Activated T-helper 1 cell treated with anti-CD3 and anti-CD28 coated beads, Interleukin-12 subunit alpha, Interleukin-12 subunit beta, Interleukin-2, Interleukin-4 antibody, amounts not matched to agents 30 ng/mL and 10 ng/mL and 1 ng/mL, durations not matched to agents 14 hours and 24 hours and 36 hours (primary cell): ENCODE measurements at regions of chr4 and their contacts with region 1.

Region 1: GRCh38 chr4:184417802-184418511 is 56.4 kb downstream of the IRF2 start:
- DNase-seq: peak; percentile 21
- H3K4me3 Mint-ChIP-seq: peak overlapping the region; percentile 78
- H3K27ac Mint-ChIP-seq: peak overlapping the region; percentile 95
- H3K4me1 Mint-ChIP-seq: peaks cover 90% of the 10 kb centered on the region
- H3K27me3 Mint-ChIP-seq: no peaks in the 10 kb centered on the region

Region 2: DNA sequence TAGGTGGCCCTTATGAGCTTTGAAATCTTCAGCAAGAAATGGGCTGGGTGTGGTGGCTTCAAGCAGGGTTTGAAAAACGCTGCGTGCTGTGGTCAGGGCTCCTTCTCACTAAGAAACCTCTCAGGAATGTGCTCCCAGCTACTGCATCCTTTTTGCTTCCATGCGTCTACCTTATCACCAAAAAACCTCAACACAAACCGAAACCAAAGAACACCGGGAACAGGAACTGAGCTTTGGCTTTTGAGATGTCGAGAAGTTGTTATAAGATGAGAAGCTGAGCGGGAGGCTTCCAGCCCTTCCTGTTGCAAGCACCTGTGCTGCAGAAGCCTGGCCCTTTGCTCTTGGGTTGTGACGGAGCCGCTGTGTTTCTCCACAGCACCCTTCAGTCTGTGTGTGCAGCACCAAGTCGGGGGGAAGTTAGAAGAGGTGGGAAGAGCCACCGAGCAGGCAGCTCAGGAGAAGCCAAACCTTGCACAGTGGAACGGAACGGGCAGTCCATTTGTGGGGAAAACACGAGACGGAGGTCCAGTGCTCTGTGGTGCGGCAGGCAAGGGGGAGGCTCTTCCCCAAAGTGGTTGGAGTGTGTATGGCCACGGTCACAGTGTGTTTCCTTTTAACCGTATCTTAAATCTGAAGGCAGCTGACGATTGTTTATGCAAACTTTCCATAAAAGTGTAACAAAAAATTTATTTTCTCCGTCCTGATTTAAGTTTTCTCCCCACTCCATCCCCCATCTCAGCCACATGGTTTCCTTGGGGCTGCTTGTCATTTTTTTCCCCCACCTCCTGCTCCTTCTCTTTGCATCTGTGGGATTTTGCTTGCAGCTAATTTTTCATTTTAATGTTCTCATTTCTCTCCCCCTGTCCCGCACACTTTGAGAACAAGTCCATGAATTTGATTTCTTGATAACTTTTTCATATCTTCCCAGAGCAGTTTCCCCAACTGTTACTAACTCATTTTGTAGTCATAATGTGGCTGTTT is 389.3 kb before region 1 on chr4:
- intact Hi-C with region 1: no loop called
- DNase-seq: peak; percentile 6
- H3K4me3 Mint-ChIP-seq: peak overlapping the region; percentile 81
- H3K27ac Mint-ChIP-seq: no peak overlapping the region
- H3K4me1 Mint-ChIP-seq: peaks cover 23% of the 10 kb centered on the region
- H3K27me3 Mint-ChIP-seq: peaks cover 36% of the 10 kb centered on the region

Region 3: DNA sequence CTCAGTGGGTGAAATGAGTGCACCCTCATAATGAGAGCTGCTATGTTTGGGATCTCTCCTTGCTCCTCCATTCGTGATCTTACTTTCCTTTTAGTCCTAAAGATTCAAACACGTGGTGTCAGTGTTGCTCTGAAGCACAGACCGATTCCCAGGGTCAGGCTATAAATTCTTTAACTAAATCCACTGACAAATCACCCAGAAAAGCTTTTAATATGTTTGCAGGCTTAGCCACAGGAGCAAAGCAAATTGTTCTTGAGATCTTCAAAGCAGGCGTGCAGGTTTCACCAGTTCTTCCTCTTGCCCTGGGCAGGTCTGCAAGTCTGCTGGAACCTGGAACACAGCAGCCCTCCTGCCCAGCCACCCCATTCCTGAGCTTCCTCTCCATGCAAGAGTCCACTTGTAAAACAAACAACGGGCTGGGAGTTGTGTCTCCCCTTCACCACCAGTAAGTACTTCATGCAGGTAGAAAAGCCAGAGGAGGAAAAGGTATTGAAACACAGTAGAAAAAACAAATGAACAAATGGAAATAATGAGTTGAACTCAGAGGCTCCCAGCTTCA is 130.2 kb before region 1 on chr4:
- intact Hi-C with region 1: loop called (anchors 1 kb)
- DNase-seq: no peak
- H3K4me3 Mint-ChIP-seq: peak overlapping the region; percentile 12
- H3K27ac Mint-ChIP-seq: peak overlapping the region; percentile 13
- H3K4me1 Mint-ChIP-seq: peaks cover 53% of the 10 kb centered on the region
- H3K27me3 Mint-ChIP-seq: no peaks in the 10 kb centered on the region

Region 4: DNA sequence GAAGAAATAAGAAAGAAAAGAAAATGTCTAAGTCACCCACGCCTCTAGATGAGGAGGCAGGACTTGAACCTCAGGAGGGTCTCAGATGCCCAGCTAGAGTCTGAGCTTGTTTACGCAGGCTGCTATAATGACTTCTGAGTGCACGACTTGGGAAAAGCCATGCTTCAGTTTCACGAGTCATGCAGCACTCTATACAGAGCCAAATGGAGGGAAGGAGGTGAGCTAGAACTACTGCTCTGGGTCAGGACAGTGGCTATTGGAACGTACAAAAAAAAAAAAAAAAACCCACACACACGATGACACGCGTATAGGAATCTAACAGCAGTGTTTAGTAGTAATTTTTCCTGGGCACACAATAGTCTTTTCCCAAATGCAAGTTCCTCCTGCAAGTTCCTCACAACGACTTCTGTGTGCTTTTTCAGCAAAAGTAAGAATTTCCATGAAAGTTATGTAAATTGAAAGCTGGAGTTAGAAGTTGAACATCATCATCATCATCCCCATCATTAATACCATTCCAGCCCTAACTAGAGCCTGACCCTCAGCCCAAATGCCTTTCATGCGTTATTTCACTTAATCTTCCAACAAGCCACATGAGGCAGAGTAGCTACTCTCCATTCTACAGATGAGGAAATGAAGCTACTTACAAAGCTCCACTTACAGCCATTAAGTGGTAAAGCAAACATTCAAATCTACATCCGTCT is 19.8 kb after region 1 on chr4:
- intact Hi-C with region 1: loop called (anchors 2 kb)
- DNase-seq: no peak
- H3K4me3 Mint-ChIP-seq: no peak overlapping the region
- H3K27ac Mint-ChIP-seq: peak overlapping the region; percentile 31
- H3K4me1 Mint-ChIP-seq: peaks cover 62% of the 10 kb centered on the region
- H3K27me3 Mint-ChIP-seq: no peaks in the 10 kb centered on the region

Region 5: GRCh38 chr4:184503869-184504300 is 85.9 kb after region 1 on chr4:
- intact Hi-C with region 1: no loop called
- DNase-seq: no peak
- H3K4me3 Mint-ChIP-seq: peak overlapping the region; percentile 9
- H3K27ac Mint-ChIP-seq: peak overlapping the region; percentile 54
- H3K4me1 Mint-ChIP-seq: peaks cover 30% of the 10 kb centered on the region
- H3K27me3 Mint-ChIP-seq: no peaks in the 10 kb centered on the region

Region 6: GRCh38 chr4:184514121-184514988 is 96.4 kb after region 1 on chr4:
- intact Hi-C with region 1: loop called (anchors 1 kb)
- DNase-seq: peak; percentile 56
- H3K4me3 Mint-ChIP-seq: peak overlapping the region; percentile 46
- H3K27ac Mint-ChIP-seq: peak overlapping the region; percentile 93
- H3K4me1 Mint-ChIP-seq: peaks cover 56% of the 10 kb centered on the region
- H3K27me3 Mint-ChIP-seq: no peaks in the 10 kb centered on the region

Region 7: DNA sequence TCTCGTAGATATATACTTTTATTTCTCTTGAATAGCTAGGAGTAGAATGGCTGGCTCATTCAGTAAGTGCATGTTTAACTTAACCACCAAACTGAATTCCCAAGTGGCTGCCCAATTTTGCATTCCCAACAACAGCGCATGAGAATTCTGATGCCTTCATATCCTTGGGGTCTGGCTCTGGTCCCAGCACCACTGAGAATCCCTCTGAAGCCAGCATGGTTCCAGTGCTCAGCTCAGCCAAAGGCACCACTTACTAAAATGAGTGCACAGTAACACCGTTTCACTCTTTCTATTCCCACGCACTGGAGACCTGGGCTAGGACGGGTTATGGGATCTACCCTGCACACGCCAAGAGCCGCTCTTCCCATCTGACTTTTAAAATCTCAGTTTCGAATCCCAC is 170.9 kb after region 1 on chr4:
- intact Hi-C with region 1: no loop called
- DNase-seq: no peak
- H3K4me3 Mint-ChIP-seq: no peak overlapping the region
- H3K27ac Mint-ChIP-seq: no peak overlapping the region
- H3K4me1 Mint-ChIP-seq: peaks cover 16% of the 10 kb centered on the region
- H3K27me3 Mint-ChIP-seq: no peaks in the 10 kb centered on the region